ENCODE measurements at regions of chr4 and their contacts with region 1.

Region 1: DNA sequence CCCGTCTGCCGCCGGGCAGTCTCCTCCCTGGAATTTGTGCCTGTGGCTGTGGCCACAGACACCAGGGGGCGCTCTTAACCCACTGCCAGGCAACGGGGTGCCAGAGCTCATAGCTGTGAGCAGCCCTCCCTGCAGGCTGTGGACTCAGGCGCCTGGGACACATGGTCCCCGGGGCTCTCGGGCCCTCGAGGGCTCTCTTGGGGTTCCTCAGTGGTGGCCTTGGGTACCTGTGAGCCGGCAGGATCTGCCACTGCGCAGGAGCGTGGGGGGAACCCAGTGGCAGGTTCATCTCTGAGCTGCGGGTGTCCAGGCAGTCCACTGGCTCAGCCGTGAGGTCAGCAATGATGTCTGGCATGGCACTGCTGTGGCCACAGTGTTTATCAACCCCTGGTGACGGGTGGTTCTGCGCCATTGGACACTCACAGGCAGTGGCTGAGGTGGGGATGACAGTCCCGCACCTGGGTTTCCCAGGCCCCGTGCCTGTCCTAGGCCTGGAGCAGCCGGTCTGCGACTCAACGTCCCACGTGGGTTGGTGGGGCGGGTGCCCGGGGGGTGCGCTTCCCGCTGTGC is 37.2 kb downstream of the PCGF3 start:
- DNase-seq: peak; percentile 78
- H3K4me3 Mint-ChIP-seq: no peak overlapping the region
- H3K27ac Mint-ChIP-seq: no peak overlapping the region
- H3K4me1 Mint-ChIP-seq: peaks cover 3% of the 10 kb centered on the region
- H3K27me3 Mint-ChIP-seq: no peaks in the 10 kb centered on the region

Region 2: DNA sequence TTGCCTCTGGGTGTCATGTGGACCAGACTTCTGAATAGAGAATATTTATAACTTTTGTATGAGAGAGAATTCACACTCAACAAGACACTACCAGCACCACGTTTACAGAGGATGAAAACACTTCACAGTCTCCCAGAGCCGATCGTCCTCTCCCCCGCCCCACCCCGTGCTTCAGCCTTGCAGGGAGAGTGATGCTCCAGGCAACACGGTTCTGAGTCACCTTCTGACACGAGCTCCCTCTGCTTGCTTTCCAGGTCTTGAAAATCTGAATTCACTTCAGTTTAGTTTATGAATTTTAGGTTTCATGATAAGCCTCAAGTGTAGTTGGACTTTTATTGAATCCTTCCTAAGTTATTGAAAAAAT is 23.3 kb after region 1 on chr4:
- CTCF ChIA-PET with region 1: interaction called, 12 read pairs
- POLR2A ChIA-PET with region 1: no interaction called
- DNase-seq: no peak
- H3K4me3 Mint-ChIP-seq: no peak overlapping the region
- H3K27ac Mint-ChIP-seq: peak overlapping the region; percentile 45
- H3K4me1 Mint-ChIP-seq: peaks cover 28% of the 10 kb centered on the region
- H3K27me3 Mint-ChIP-seq: no peaks in the 10 kb centered on the region